MCF 10A (cell line): ENCODE measurements at regions of chr11 and their contacts with region 1.

Region 1: DNA sequence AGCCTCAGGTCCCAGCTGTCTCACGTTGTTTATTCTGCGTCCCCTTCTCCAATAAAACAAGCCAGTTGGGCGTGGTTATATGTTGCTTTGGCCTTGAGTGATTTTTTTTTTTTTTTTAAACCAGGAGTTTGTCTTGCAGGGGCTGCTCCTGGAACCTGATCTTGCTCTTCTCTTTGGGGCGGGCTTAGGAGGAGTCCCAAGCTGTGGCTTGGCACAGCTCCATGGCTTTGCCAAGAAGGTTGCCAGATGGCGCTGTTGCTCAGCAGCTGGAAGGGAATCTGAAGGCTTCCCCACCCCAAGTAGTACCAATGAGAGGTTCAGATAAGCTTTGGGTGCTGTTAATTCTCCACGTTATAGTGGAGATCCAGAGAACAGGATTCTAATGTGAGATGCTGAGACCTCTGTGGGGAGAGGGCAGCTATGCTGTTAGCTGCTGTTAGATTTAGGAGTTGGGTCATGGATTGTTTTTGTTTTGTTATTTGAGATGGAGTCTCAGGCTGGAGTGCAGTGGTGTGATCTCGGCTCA is 2.0 kb upstream of the FERMT3 start:
- DNase-seq: peak; percentile 96
- H3K4me3 Mint-ChIP-seq: no peak overlapping the region
- H3K27ac Mint-ChIP-seq: peak overlapping the region; percentile 37
- H3K4me1 Mint-ChIP-seq: peaks cover 12% of the 10 kb centered on the region
- H3K27me3 Mint-ChIP-seq: no peaks in the 10 kb centered on the region
- CTCF ChIP-seq: peak; percentile 83

Region 2: GRCh38 chr11:64216879-64217278 is 12.4 kb after region 1 on chr11:
- CTCF ChIA-PET with region 1: interaction called, 14 read pairs
- POLR2A ChIA-PET with region 1: interaction called, 8 read pairs
- intact Hi-C with region 1: no loop called
- DNase-seq: no peak
- H3K4me3 Mint-ChIP-seq: no peak overlapping the region
- H3K27ac Mint-ChIP-seq: no peak overlapping the region
- H3K4me1 Mint-ChIP-seq: no peaks in the 10 kb centered on the region
- H3K27me3 Mint-ChIP-seq: no peaks in the 10 kb centered on the region
- CTCF ChIP-seq: no peak